ENCODE measurements at regions of chr2 and their contacts with region 1.

Region 1: GRCh38 chr2:63888490-63889402 is 47.0 kb downstream of the UGP2 start:
- DNase-seq: peak; percentile 27 to 56
- ATAC-seq: peak; percentile 76 to 83 (median 83)
- H3K4me3 ChIP-seq: no peak overlapping the region
- H3K27ac ChIP-seq: peak overlapping the region; percentile 66
- H3K4me1 ChIP-seq: peaks cover 36% of the 10 kb centered on the region
- H3K27me3 ChIP-seq: no peaks in the 10 kb centered on the region
- CTCF ChIP-seq: peak; percentile 82

Region 2: DNA sequence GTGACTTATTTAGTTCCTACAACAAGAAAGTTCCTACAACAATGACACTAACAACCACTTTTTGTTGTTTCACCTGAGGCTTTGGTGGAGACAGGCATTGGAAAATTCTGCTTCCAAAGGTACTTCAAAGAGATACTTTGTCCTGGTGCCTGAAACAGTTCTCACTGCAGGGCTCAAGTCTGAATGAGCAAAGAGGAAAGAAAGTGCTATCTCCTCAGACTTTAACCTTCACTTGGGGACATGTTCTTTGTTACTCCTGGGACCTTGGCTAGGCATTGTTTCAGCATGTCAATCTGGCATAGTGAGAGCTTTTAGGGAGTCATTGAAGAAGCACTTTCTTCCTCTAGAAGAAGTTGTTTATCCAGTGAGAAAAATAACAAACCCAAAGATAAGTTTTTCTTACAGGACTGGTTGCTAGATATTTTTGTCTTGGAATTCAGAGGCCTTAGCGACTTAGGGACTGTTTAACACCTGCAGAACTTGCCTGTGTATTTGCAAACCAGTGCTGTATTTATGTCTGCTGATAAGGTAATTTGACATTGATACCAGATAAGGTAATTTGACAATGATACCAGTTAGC is 287.8 kb before region 1 on chr2:
- intact Hi-C with region 1: no loop called
- DNase-seq: no peak
- ATAC-seq: no peak
- H3K4me3 ChIP-seq: no peak overlapping the region
- H3K27ac ChIP-seq: no peak overlapping the region
- H3K4me1 ChIP-seq: no peaks in the 10 kb centered on the region
- H3K27me3 ChIP-seq: no peaks in the 10 kb centered on the region
- CTCF ChIP-seq: no peak

Region 3: DNA sequence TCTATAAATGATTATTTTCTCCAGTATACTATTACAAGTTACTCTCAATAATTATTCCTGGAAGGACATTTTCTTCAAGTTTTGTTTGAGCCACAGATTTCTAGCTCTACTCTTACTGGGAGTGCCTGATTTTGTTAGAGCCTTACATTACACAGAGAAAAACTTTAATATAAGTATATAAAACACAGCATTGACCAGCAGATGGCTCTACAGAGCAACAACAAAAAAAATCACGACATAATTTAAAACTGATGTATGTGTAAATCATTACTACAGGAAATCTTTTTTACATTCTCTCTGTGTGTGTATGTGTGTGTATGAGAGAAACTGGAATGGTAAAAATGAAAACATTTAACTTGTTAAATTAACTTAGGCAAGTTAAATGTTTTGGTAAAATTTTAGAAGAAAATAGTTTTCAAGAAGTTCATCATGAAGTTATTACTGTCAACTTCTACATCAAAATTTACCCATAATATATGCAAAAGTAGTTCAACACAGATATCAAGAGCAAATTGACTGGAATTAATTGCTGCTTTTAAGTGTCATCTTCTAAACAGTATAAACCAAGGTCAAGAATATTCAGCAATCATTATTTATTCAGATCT is 196.6 kb before region 1 on chr2:
- intact Hi-C with region 1: loop called (anchors 2 to 10 kb)
- DNase-seq: no peak
- ATAC-seq: peak; percentile 46 to 80 (median 67)
- H3K4me3 ChIP-seq: no peak overlapping the region
- H3K27ac ChIP-seq: no peak overlapping the region
- H3K4me1 ChIP-seq: no peaks in the 10 kb centered on the region
- H3K27me3 ChIP-seq: no peaks in the 10 kb centered on the region
- CTCF ChIP-seq: peak; percentile 71

Region 4: DNA sequence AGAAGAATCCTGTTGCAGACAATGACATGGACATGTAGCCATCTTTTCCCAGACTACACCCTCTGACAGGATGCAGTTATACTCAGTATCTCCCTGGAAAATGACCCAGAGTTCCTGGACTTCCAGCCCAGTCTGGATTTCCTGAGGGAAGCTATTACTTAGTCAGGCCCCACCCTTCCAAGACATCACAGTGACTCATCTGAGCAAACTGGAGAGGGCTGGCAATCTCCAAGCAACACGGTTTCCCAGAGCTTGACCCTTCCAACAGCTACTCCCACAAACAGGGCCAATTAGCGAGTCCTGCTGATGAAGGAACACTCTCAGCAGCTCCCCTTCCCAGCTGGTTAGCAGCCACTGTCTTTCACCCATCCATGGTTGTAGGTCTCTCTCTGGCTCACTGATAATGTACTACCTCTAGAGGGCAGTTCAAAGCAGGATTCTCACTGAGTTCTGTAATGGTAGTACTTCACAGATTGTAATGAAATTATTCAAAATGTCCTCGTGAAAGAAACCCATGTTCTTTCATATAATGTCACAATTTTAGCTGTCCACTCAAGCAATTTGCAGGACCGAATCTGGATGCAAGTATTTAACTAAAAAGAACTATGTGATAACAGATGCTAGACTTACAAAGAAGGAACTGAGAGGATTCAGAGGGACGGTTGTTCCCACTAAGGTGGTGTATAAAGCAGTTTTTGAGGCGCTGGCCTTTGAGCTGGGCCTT is 189.8 kb before region 1 on chr2:
- intact Hi-C with region 1: loop called in 1 of 2 experiments (anchors 10 kb)
- DNase-seq: peak; percentile 52 to 66
- ATAC-seq: peak; percentile 89 to 93 (median 92)
- H3K4me3 ChIP-seq: no peak overlapping the region
- H3K27ac ChIP-seq: peak overlapping the region; percentile 38
- H3K4me1 ChIP-seq: no peaks in the 10 kb centered on the region
- H3K27me3 ChIP-seq: no peaks in the 10 kb centered on the region
- CTCF ChIP-seq: peak; percentile 54

Region 5: GRCh38 chr2:63763391-63763941 is 125.3 kb before region 1 on chr2:
- intact Hi-C with region 1: no loop called
- DNase-seq: no peak
- ATAC-seq: peak in 1 of 4 donors; percentile 44
- H3K4me3 ChIP-seq: no peak overlapping the region
- H3K27ac ChIP-seq: no peak overlapping the region
- H3K4me1 ChIP-seq: peaks cover 5% of the 10 kb centered on the region
- H3K27me3 ChIP-seq: no peaks in the 10 kb centered on the region
- CTCF ChIP-seq: no peak

Region 6: GRCh38 chr2:63814114-63814513 is 74.6 kb before region 1 on chr2:
- intact Hi-C with region 1: no loop called
- DNase-seq: no peak
- ATAC-seq: no peak
- H3K4me3 ChIP-seq: no peak overlapping the region
- H3K27ac ChIP-seq: no peak overlapping the region
- H3K4me1 ChIP-seq: peaks cover 13% of the 10 kb centered on the region
- H3K27me3 ChIP-seq: no peaks in the 10 kb centered on the region
- CTCF ChIP-seq: no peak

Measured in psoas muscle (tissue), 8 donors.